Body of pancreas (tissue), 4 donors: ENCODE measurements at regions of chr6 and their contacts with region 1.

Region 1: DNA sequence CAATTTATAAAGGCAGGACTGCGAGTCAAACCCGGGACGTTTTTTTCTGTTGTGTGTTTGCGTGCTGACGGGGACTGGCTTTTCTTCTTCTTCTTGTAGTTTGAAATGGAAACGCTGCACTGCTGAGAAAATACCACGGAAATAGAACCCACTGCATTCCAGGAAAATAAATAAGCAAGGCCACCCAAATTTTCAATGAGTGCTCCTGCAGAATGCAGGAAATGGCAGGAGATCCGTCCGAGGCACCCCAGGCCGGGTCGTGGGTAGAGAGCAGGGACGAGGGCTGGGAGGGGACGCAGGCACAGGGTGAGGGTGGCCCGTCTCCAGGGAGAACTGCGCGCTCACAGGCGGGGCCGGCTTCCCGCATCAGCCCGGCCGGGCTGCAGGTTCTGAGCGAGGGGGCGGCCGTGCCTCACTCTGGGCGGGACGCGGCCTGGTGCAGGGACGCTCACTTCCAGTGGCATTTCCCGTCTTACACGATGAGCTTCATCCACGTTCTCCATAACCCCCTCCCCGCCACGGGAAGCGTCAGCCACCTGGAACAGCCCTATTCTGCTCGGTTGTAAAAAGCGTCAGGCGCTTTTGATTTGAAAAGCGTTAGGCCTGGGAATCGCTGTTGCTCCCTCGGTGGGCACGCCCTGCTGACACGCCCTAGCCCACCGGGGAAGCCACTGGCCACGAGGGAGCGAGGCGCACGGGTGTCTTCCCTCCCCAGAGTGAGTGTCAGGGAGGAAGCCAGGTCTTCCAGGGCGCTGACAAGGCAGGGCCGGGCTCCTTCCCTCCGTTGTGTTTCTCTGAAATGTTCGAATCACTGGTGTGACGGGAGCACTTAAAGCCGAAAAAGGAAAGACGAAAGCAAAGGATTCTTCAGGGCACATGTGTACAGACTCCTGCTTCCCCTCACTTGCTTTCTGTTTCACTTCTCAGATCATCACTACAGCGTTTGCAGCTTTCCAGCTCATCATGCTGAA is 17.9 kb upstream of the EXOC2 start:
- DNase-seq: peak; percentile 15 to 46 (median 36)
- ATAC-seq: peak; percentile 64
- H3K4me3 ChIP-seq: peak overlapping the region; percentile 2 to 7
- H3K27ac ChIP-seq: peak overlapping the region in 3 of 4 donors; percentile 40 to 75 (median 65)
- H3K4me1 ChIP-seq: peaks cover 5% of the 10 kb centered on the region
- H3K27me3 ChIP-seq: no peaks in the 10 kb centered on the region
- CTCF ChIP-seq: no peak
- POLR2A ChIP-seq: peak in 2 of 3 donors; percentile 28 to 40

Region 2: DNA sequence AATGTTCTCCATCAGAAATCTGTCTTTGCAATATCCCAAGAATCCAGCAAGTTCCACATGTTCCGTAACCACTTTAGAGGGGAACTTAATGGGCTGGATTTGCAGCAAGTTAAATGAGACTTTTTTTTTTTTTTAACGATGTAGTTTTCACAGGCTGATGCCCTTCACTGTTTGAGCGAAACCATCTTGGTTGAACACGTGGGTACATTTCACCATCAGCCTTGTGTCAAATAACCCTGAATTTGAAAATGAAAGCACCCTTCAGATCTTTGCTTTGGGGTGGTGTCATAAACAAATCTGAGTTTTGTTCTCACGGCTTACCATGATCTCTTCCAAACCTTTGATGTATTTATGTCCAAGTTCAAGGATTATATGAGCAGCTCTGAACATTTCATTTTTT is 55.7 kb after region 1 on chr6:
- intact Hi-C with region 1: no loop called
- DNase-seq: no peak
- ATAC-seq: no peak
- H3K4me3 ChIP-seq: no peak overlapping the region
- H3K27ac ChIP-seq: no peak overlapping the region
- H3K4me1 ChIP-seq: no peaks in the 10 kb centered on the region
- H3K27me3 ChIP-seq: no peaks in the 10 kb centered on the region
- CTCF ChIP-seq: no peak
- POLR2A ChIP-seq: no peak

Region 3: DNA sequence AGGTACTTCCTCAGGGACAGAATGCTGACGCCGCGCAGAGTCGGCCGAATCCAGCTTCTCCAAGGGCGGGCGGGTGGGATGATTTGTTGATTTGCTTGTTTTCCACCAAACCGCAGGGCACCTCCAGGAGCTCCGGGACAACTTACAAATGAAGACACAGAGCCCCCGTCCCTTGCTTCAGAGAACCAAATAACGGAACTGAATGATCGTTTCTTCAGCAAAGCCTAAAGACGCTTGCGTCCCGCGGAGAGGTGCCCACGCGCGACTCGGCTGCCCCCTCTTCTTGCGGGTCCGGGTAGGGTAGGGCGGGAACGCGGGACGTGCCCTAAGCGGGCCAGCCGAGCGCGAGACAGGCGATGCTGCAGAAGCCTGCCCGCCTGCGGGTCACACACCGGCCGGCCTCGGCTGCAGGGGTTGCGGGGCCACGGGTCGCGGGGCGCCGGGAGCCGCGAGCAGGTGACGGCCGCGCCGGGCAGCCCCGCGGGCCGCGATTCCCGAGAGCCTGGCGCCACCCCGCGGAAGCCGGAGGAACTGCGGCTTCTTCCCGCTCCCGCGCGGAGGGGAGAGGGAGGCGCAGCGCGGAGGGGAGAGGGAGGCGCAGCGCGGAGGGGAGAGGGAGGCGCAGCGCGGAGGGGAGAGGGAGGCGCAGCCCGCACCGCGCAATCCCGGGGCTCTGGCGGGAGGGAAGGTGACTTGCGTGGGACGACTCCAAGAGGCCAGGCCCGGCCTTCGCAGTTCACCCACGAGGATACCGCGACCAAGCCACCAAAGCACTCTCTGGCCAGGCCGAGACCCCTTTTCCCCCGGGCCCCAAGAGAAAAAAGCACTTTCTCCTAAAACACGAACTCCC is 670.8 kb after region 1 on chr6:
- intact Hi-C with region 1: loop called (anchors 10 kb)
- DNase-seq: peak; percentile 31 to 72 (median 57)
- ATAC-seq: peak; percentile 82
- H3K4me3 ChIP-seq: no peak overlapping the region
- H3K27ac ChIP-seq: no peak overlapping the region
- H3K4me1 ChIP-seq: peaks cover 42% of the 10 kb centered on the region
- H3K27me3 ChIP-seq: peaks cover 0 to 64% of the 10 kb centered on the region in 2 donors
- CTCF ChIP-seq: peak; percentile 69 to 95 (median 91)
- POLR2A ChIP-seq: no peak